Mucosa of descending colon (tissue), 3 donors: ENCODE measurements at regions of chrX and their contacts with region 1.

Region 1: DNA sequence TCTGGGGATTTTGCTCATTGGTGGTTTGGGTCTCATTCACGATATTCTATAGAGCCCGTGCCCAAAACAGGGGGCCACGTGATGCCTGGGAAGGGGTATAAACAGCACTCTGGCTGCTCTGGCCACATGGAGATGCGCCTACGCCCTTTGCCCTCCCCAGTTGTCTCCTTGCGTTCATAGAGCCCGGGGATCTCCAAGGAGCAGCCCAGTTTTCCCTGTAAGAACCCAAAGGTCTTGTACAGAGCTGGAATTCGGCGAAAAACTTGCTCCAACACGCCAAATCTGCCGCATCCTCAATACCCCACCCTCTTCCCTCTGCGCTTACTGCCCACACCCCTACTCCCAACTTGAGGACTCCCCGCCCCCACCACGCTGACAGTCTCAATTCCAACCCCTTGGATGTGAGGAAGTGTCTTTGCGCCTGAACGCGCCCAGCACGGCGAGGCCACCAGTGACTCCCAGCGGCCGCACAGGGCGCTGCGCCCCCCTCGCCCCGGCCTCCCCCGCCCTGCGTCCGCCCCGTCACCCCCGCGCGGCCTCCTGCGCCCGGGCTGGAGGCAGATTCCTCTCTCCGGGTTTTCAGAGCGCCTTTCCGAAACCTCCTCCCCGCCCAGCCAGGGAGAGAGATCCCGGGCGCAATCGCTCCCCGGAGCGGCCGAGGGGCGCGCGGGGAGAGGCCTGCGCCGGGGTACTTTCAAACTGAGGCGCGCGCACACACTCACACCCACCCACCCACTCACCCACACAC is at the start of gene NHS:
- DNase-seq: peak; percentile 66 to 80 (median 77)
- ATAC-seq: peak; percentile 82
- H3K4me3 ChIP-seq: peak within 1 kb of the TSS; percentile 3
- H3K4me1 ChIP-seq: no peaks in the 10 kb centered on the region
- CTCF ChIP-seq: peak; percentile 21
- total RNA-seq, gene NHS: 1.8 to 11.7 (median 2.1) TPM

Region 2: DNA sequence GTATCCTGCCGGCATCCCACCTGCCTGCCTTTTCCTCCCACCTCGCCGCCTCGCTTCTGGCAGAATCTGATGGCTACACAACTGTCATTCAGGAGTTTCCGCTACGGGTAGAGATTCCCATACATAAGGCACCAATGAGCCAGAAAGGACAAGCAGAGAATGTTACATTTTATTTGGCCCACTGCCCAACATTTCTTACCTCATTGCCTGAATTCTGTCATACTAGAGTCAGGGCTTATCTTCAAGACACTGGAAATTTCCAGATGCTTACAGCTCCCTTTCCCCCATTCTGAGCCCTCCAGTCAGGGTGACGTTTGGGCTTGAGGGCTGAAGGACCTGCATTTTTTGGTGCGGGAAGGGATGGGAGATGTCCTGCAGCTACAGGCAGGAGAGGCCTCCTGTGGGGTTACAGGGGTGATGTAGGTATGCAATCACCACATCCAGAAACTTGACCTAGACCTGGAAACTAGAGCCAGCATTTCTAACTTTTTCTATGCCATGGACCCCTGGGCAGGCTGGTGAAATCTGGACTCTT is 113.3 kb after region 1 on chrX:
- intact Hi-C with region 1: no loop called
- DNase-seq: no peak
- ATAC-seq: no peak
- H3K4me3 ChIP-seq: no peak overlapping the region
- H3K4me1 ChIP-seq: no peaks in the 10 kb centered on the region
- CTCF ChIP-seq: no peak

Region 3: GRCh38 chrX:17597836-17598442 is 223.1 kb after region 1 on chrX:
- intact Hi-C with region 1: loop called in 1 of 2 experiments (anchors 5 kb)
- DNase-seq: peak; percentile 77 to 78 (median 78)
- ATAC-seq: peak; percentile 62
- H3K4me3 ChIP-seq: no peak overlapping the region
- H3K4me1 ChIP-seq: no peaks in the 10 kb centered on the region
- CTCF ChIP-seq: no peak